ENCODE measurements at regions of chr3 and their contacts with region 1.

Region 1: GRCh38 chr3:107574650-107575049 is 51.9 kb downstream of the BBX start:
- DNase-seq: peak; percentile 22
- ATAC-seq: no peak
- H3K4me3 Mint-ChIP-seq: no peak overlapping the region
- H3K27ac Mint-ChIP-seq: no peak overlapping the region
- H3K4me1 Mint-ChIP-seq: peaks cover 27% of the 10 kb centered on the region
- H3K27me3 Mint-ChIP-seq: no peaks in the 10 kb centered on the region
- CTCF ChIP-seq: peak; percentile 69

Region 2: GRCh38 chr3:107555359-107555758 is 19.3 kb before region 1 on chr3:
- CTCF ChIA-PET with region 1: interaction called, 20 read pairs
- POLR2A ChIA-PET with region 1: interaction called, 3 read pairs
- intact Hi-C with region 1: no loop called
- DNase-seq: no peak
- ATAC-seq: no peak
- H3K4me3 Mint-ChIP-seq: no peak overlapping the region
- H3K27ac Mint-ChIP-seq: no peak overlapping the region
- H3K4me1 Mint-ChIP-seq: peaks cover 38% of the 10 kb centered on the region
- H3K27me3 Mint-ChIP-seq: no peaks in the 10 kb centered on the region
- CTCF ChIP-seq: no peak

Region 3: DNA sequence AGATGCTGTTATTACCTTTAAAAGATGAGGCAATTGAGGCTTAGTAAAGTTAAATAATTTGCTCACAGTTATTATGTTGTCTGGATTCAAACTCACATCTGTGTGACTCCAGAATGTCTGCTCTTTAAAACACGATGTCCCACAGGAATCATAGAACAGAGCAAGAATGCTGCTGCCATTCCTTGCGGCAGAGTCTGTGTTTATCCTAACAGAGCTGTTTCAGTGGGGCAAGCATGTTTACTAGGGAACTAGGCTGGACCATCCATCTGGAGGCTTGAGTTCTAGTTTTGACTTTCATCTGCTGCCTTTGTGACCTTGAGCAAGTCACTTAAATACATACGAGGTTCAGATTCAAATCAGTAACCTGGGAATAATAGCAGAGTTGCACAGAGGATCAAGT is 20.2 kb after region 1 on chr3:
- CTCF ChIA-PET with region 1: interaction called, 11 read pairs
- POLR2A ChIA-PET with region 1: interaction called, 3 read pairs
- intact Hi-C with region 1: no loop called
- DNase-seq: no peak
- ATAC-seq: no peak
- H3K4me3 Mint-ChIP-seq: no peak overlapping the region
- H3K27ac Mint-ChIP-seq: no peak overlapping the region
- H3K4me1 Mint-ChIP-seq: peaks cover 39% of the 10 kb centered on the region
- H3K27me3 Mint-ChIP-seq: no peaks in the 10 kb centered on the region
- CTCF ChIP-seq: no peak

Region 4: GRCh38 chr3:107627962-107628542 is 53.4 kb after region 1 on chr3:
- CTCF ChIA-PET with region 1: interaction called, 10 read pairs
- POLR2A ChIA-PET with region 1: no interaction called
- intact Hi-C with region 1: no loop called
- DNase-seq: no peak
- ATAC-seq: no peak
- H3K4me3 Mint-ChIP-seq: no peak overlapping the region
- H3K27ac Mint-ChIP-seq: no peak overlapping the region
- H3K4me1 Mint-ChIP-seq: peaks cover 36% of the 10 kb centered on the region
- H3K27me3 Mint-ChIP-seq: no peaks in the 10 kb centered on the region
- CTCF ChIP-seq: peak; percentile 36

Region 5: GRCh38 chr3:107660306-107660976 is 85.8 kb after region 1 on chr3:
- CTCF ChIA-PET with region 1: interaction called, 27 read pairs
- POLR2A ChIA-PET with region 1: no interaction called
- intact Hi-C with region 1: no loop called
- DNase-seq: no peak
- ATAC-seq: no peak
- H3K4me3 Mint-ChIP-seq: no peak overlapping the region
- H3K27ac Mint-ChIP-seq: no peak overlapping the region
- H3K4me1 Mint-ChIP-seq: peaks cover 26% of the 10 kb centered on the region
- H3K27me3 Mint-ChIP-seq: no peaks in the 10 kb centered on the region
- CTCF ChIP-seq: peak; percentile 68

Region 6: DNA sequence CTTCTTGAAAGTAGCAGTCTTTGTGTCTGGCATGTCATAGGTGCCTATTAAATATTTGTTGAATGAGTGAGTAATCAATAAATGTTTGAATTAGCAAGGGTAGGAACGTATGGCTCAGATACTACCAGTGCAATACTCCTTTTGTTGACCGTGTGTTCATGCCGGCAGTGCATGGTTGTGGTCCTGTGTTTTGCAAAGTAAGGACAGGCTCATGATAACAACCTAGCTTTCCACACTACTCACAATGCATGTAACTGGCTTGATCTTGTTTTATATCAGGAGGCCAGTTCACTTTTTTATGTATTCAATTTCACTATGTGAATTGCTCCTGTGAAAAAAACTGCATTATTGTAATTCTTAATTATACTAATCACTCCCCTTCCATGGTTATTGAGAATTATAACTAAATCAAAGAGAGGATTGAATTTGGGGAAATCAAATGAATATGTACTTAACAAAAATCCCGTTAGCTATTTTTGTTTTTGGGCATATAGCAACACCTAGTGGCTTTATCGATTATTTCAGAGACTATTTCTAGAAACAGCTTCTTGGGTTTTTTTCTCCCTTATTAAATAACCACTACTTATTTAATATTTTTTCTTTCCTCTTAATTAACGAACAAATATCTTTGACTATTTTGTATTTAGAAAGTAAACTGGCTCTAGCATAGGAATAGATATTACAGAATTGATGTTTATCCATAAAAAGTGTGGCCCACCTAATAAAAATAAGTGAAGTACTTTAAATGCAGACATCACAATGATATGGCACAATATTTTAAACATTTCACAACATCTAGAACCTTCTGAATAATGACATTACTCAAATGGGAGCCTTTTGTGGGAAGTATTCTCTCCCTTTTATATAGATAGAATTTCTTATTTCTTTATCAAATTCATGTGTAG is 166.6 kb after region 1 on chr3:
- CTCF ChIA-PET with region 1: interaction called, 10 read pairs
- POLR2A ChIA-PET with region 1: no interaction called
- intact Hi-C with region 1: no loop called
- DNase-seq: no peak
- ATAC-seq: no peak
- H3K4me3 Mint-ChIP-seq: no peak overlapping the region
- H3K27ac Mint-ChIP-seq: no peak overlapping the region
- H3K4me1 Mint-ChIP-seq: no peaks in the 10 kb centered on the region
- H3K27me3 Mint-ChIP-seq: no peaks in the 10 kb centered on the region
- CTCF ChIP-seq: no peak

Region 7: DNA sequence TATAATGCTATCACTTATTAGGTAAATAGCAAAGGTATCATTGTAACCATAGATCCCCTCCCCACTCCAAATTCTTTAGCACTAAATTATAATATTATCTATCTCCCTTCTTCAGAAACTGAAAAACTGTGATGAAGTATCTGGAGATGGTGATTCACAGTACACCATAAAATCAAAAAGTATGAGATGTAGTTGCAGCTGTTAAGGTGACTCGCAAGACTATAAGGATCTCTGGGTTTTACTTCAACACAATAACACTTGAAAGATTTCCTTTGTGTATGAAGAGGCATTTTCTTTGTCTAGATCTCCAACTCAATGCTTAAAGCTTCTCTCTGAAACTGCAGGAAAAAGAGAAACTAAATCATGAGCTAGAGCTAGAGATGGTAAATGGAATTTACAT is 600.7 kb after region 1 on chr3:
- CTCF ChIA-PET with region 1: no interaction called
- POLR2A ChIA-PET with region 1: no interaction called
- intact Hi-C with region 1: no loop called
- DNase-seq: no peak
- ATAC-seq: peak; percentile 47
- H3K4me3 Mint-ChIP-seq: peak overlapping the region; percentile 37
- H3K27ac Mint-ChIP-seq: peak overlapping the region; percentile 26
- H3K4me1 Mint-ChIP-seq: peaks cover 26% of the 10 kb centered on the region
- H3K27me3 Mint-ChIP-seq: no peaks in the 10 kb centered on the region
- CTCF ChIP-seq: no peak